Activated B cell treated with CpG ODN at 0.5 μM for 24 hours (primary cell): ENCODE measurements at regions of chr1 and their contacts with region 1.

Region 1: GRCh38 chr1:11012250-11013171 is at the start of gene TARDBP:
- DNase-seq: peak; percentile 93
- ATAC-seq: peak; percentile 87
- H3K4me3 Mint-ChIP-seq: peak within 1 kb of the TSS; percentile 89
- H3K27ac Mint-ChIP-seq: peak within 1 kb of the TSS; percentile 99
- H3K4me1 Mint-ChIP-seq: peaks cover 35% of the 10 kb centered on the region
- H3K27me3 Mint-ChIP-seq: no peaks in the 10 kb centered on the region
- CTCF ChIP-seq: no peak
- total RNA-seq, gene TARDBP: 170 and 193 TPM in 2 replicates

Region 2: DNA sequence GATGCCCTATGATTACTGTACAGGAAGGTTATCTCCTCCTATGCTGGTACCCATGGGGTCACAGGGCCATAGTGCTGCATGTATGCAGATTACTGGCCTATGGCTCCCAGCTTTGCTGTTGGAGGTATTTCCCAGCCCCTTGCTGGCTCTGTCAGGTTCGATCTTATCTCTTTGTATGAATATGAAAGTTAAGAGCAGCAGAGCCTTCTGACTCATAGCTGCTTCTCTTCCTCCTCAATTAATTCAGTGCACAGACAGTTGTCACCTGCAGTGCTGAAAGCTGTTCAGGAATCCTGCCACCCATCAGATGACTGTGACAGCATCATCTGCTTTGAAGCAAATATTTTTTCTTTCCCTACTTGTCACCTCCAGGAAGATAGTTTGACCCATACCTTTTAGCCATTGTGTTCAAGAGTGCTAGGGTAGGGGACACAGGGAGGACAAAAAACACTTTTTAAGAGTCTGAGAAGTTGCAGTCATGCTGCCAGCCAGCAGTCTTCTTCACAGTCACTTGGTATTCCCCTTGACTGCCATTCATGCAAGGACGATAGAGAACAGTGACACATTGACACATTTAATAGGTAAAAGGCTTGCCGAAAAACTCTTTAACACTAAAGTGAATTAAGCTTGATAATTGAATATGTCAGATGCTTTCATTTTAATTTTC is 729.1 kb before region 1 on chr1:
- CTCF ChIA-PET with region 1: no interaction called
- POLR2A ChIA-PET with region 1: no interaction called
- intact Hi-C with region 1: no loop called
- DNase-seq: no peak
- ATAC-seq: no peak
- H3K4me3 Mint-ChIP-seq: no peak overlapping the region
- H3K27ac Mint-ChIP-seq: no peak overlapping the region
- H3K4me1 Mint-ChIP-seq: no peaks in the 10 kb centered on the region
- H3K27me3 Mint-ChIP-seq: no peaks in the 10 kb centered on the region
- CTCF ChIP-seq: no peak

Region 3: GRCh38 chr1:10472220-10473144 is 540.0 kb before region 1 on chr1 and contains the start of gene DFFA:
- CTCF ChIA-PET with region 1: no interaction called
- POLR2A ChIA-PET with region 1: no interaction called
- intact Hi-C with region 1: loop called (anchors 1 kb)
- DNase-seq: peak; percentile 82
- ATAC-seq: peak; percentile 78
- H3K4me3 Mint-ChIP-seq: peak within 1 kb of the TSS; percentile 94
- H3K27ac Mint-ChIP-seq: peak within 1 kb of the TSS; percentile 90
- H3K4me1 Mint-ChIP-seq: peaks cover 51% of the 10 kb centered on the region
- H3K27me3 Mint-ChIP-seq: no peaks in the 10 kb centered on the region
- CTCF ChIP-seq: no peak
- total RNA-seq, gene DFFA: 34.3 and 39.0 TPM in 2 replicates

Region 4: DNA sequence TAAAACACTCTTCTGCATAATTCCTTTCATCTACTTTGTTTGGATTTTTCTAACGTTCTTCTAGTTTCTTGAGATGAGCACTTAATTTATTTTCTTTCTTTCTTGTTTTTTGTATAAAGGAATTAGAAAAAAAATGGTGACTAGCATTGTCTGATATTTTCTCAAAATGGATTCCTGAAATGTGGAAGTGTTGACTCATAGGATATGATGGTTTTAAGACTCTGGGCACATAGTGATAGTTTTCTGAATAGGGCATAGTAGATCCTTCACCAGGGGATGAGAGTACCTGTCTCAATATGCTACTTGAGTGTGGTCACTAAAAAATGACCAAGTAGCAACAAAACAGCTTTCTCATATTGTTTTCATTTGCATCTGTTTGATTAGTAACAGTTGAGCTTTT is 436.9 kb before region 1 on chr1:
- CTCF ChIA-PET with region 1: no interaction called
- POLR2A ChIA-PET with region 1: no interaction called
- intact Hi-C with region 1: no loop called
- DNase-seq: no peak
- ATAC-seq: no peak
- H3K4me3 Mint-ChIP-seq: no peak overlapping the region
- H3K27ac Mint-ChIP-seq: no peak overlapping the region
- H3K4me1 Mint-ChIP-seq: no peaks in the 10 kb centered on the region
- H3K27me3 Mint-ChIP-seq: no peaks in the 10 kb centered on the region
- CTCF ChIP-seq: no peak

Region 5: GRCh38 chr1:11099310-11100149 is 87.0 kb after region 1 on chr1 and contains the start of gene EXOSC10:
- CTCF ChIA-PET with region 1: no interaction called
- POLR2A ChIA-PET with region 1: interaction called, 21 read pairs
- intact Hi-C with region 1: no loop called
- DNase-seq: peak; percentile 94
- ATAC-seq: peak; percentile 97
- H3K4me3 Mint-ChIP-seq: peak within 1 kb of the TSS; percentile 95
- H3K27ac Mint-ChIP-seq: peak within 1 kb of the TSS; percentile 93
- H3K4me1 Mint-ChIP-seq: peaks cover 15% of the 10 kb centered on the region
- H3K27me3 Mint-ChIP-seq: no peaks in the 10 kb centered on the region
- CTCF ChIP-seq: no peak
- total RNA-seq, gene EXOSC10: 89.3 and 108 TPM in 2 replicates